MCF 10A (cell line): ENCODE measurements at regions of chr20 and their contacts with region 1.

Region 1: DNA sequence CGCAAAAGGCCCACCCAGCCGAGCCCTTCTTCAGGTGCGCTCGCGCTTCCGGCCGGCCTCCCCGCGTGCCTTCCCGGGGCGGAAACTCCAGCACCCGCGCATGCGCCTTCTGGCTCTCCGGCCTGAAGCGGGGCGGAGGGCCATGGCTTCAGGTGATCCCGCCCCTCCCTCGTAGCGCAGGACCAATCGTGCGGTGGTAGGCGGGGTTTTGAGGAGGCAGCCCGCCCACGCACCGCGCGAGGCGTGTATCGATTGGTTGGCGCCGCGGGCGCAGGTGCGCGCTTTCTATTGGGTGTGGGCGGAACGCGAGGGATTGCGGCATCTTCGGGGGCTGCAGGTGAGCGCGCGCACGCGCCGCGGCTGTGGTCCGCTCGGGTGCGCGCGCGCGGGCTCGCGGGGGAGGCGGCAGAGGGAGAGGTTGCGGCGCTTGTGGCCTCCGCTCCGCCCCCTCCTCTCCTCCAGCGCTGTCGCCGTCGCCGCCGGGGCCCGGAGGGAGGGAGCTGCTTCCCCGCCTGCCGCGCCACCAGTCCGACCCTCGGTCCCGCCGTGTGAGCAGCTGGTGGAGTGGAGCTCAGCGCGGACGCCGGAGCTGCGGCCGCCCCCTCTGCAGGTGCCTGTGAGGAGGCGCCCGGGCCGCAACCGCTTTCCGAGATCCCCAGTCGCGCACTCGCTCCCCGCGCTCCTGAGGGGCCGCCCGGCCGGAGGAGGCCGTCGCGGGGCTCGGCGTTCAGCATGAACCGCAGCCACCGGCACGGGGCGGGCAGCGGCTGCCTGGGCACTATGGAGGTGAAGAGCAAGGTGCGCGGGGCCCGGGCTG is at the start of gene PARD6B:
- DNase-seq: peak; percentile 99
- H3K4me3 Mint-ChIP-seq: peak within 1 kb of the TSS; percentile 77
- H3K27ac Mint-ChIP-seq: peak within 1 kb of the TSS; percentile 74
- H3K4me1 Mint-ChIP-seq: peaks cover 40% of the 10 kb centered on the region
- H3K27me3 Mint-ChIP-seq: no peaks in the 10 kb centered on the region
- CTCF ChIP-seq: no peak
- total RNA-seq, gene PARD6B: 5.3 and 5.8 TPM in 2 replicates

Region 2: GRCh38 chr20:50491926-50492634 is 239.2 kb before region 1 on chr20:
- CTCF ChIA-PET with region 1: interaction called, 4 read pairs
- POLR2A ChIA-PET with region 1: interaction called, 11 read pairs
- intact Hi-C with region 1: no loop called
- DNase-seq: peak; percentile 92
- H3K4me3 Mint-ChIP-seq: peak overlapping the region; percentile 60
- H3K27ac Mint-ChIP-seq: peak overlapping the region; percentile 92
- H3K4me1 Mint-ChIP-seq: peaks cover 39% of the 10 kb centered on the region
- H3K27me3 Mint-ChIP-seq: no peaks in the 10 kb centered on the region
- CTCF ChIP-seq: no peak

Region 3: GRCh38 chr20:50663095-50663850 is 68.0 kb before region 1 on chr20:
- CTCF ChIA-PET with region 1: interaction called, 17 read pairs
- POLR2A ChIA-PET with region 1: interaction called, 104 read pairs
- intact Hi-C with region 1: no loop called
- DNase-seq: peak; percentile 84
- H3K4me3 Mint-ChIP-seq: no peak overlapping the region
- H3K27ac Mint-ChIP-seq: peak overlapping the region; percentile 53
- H3K4me1 Mint-ChIP-seq: peaks cover 21% of the 10 kb centered on the region
- H3K27me3 Mint-ChIP-seq: no peaks in the 10 kb centered on the region
- CTCF ChIP-seq: peak; percentile 60

Region 4: DNA sequence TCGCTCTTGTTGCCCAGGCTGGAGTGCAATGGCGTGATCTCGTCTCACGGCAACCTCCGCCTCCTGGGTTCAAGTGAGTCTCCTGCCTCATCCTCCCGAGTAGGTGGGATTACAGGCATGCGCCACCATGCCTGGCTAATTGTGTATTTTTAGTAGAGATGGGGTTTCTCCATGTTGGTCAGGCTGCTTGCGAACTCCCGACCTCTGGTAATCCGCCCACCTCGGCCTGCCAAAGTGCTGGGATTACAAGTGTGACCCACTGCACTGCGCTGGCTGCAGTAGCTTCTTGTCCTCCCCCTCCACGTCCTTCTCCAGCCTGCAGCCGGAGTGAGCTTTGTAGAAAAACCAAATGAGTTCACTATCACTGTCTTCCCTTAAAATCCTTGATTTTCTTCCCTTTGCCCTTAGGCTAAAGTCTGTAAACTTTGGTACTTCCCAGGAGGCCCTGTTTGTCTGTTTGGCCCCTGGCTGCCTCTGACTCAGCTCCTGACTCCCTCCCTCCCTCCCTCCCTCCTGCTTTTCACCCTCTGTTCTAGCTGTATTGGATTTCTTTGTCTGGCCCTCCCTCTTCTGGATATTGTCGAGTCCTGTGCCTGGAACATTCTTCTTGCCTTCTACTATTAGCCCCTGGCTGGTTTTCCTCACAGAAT is 13.0 kb after region 1 on chr20:
- CTCF ChIA-PET with region 1: interaction called, 21 read pairs
- POLR2A ChIA-PET with region 1: interaction called, 168 read pairs
- intact Hi-C with region 1: no loop called
- DNase-seq: peak; percentile 88
- H3K4me3 Mint-ChIP-seq: peak overlapping the region; percentile 35
- H3K27ac Mint-ChIP-seq: peak overlapping the region; percentile 51
- H3K4me1 Mint-ChIP-seq: peaks cover 26% of the 10 kb centered on the region
- H3K27me3 Mint-ChIP-seq: no peaks in the 10 kb centered on the region
- CTCF ChIP-seq: peak; percentile 34

Region 5: GRCh38 chr20:50762435-50763201 is 31.4 kb after region 1 on chr20:
- CTCF ChIA-PET with region 1: interaction called, 5 read pairs
- POLR2A ChIA-PET with region 1: interaction called, 34 read pairs
- intact Hi-C with region 1: no loop called
- DNase-seq: peak; percentile 94
- H3K4me3 Mint-ChIP-seq: peak overlapping the region; percentile 61
- H3K27ac Mint-ChIP-seq: peak overlapping the region; percentile 89
- H3K4me1 Mint-ChIP-seq: peaks cover 27% of the 10 kb centered on the region
- H3K27me3 Mint-ChIP-seq: no peaks in the 10 kb centered on the region
- CTCF ChIP-seq: no peak

Region 6: GRCh38 chr20:50831622-50832021 is 100.4 kb after region 1 on chr20:
- CTCF ChIA-PET with region 1: no interaction called
- POLR2A ChIA-PET with region 1: no interaction called
- intact Hi-C with region 1: no loop called
- DNase-seq: no peak
- H3K4me3 Mint-ChIP-seq: no peak overlapping the region
- H3K27ac Mint-ChIP-seq: no peak overlapping the region
- H3K4me1 Mint-ChIP-seq: peaks cover 9% of the 10 kb centered on the region
- H3K27me3 Mint-ChIP-seq: no peaks in the 10 kb centered on the region
- CTCF ChIP-seq: no peak

Region 7: GRCh38 chr20:50879649-50880550 is 148.6 kb after region 1 on chr20:
- CTCF ChIA-PET with region 1: no interaction called
- POLR2A ChIA-PET with region 1: no interaction called
- intact Hi-C with region 1: no loop called
- DNase-seq: no peak
- H3K4me3 Mint-ChIP-seq: no peak overlapping the region
- H3K27ac Mint-ChIP-seq: peak overlapping the region; percentile 65
- H3K4me1 Mint-ChIP-seq: no peaks in the 10 kb centered on the region
- H3K27me3 Mint-ChIP-seq: no peaks in the 10 kb centered on the region
- CTCF ChIP-seq: no peak

Region 8: DNA sequence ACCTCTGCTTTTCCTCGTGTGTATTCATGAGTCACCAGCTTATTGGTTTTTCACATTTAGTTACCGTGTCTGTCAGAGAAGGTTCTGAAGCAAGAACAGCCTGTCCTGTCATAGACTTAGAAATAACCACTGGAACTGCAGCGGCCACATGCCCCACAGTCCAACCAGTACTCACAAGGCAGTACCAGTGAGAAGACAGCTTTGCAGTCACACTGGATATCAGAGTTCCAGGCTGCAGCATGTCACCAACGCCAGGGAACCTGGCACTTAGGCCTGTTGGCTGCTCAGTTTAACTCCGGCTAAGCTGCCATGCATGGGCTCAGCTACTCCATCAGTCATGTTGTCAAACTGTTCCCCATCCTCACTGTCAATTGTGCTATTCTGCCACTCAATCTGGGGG is 159.9 kb after region 1 on chr20:
- CTCF ChIA-PET with region 1: no interaction called
- POLR2A ChIA-PET with region 1: no interaction called
- intact Hi-C with region 1: no loop called
- DNase-seq: no peak
- H3K4me3 Mint-ChIP-seq: no peak overlapping the region
- H3K27ac Mint-ChIP-seq: no peak overlapping the region
- H3K4me1 Mint-ChIP-seq: no peaks in the 10 kb centered on the region
- H3K27me3 Mint-ChIP-seq: no peaks in the 10 kb centered on the region
- CTCF ChIP-seq: no peak